Gastrocnemius medialis (tissue), 4 donors: ENCODE measurements at regions of chr6 and their contacts with region 1.

Region 1: DNA sequence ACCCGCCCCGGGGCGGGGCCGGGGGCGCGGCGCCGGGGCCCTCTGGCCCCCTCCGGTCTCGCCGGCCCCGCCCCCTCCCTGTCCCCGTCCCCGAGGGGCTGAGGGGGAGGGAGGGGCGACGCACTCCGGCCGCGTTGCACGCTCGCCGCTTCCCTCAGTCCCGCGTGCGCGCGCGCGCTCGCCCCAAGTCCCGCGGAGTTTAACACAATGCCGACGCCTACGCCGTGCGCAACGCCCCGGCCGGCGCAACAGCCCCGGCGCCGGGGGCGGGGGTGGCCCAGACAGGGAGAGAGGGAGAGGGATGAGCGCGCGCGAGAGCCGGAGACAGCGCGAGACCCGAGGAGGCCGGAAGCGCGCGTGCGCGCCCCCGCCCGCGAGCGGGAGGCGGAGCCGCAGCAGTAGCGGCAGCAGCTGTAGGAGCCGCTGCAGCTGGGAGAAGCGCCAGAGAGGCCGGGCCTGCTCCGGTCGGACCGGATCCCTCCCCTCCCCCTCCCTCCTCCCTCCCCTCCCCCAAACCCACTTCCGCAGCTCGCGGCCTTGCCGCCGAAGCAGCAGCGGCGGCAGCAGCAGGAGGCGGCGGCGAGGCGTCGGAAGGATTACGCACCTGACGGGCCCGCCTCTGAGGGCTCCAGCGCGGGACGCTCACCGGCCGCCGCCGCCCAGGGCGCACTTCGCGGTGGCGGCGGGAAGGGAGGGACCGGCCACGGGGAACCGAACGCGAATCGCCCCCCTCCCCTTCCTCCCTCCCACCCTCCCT is 905 bp downstream of the ZBTB2 start:
- DNase-seq: peak; percentile 93 to 97
- ATAC-seq: peak; percentile 78 to 81
- H3K4me3 ChIP-seq: peak overlapping the region; percentile 81 to 96 (median 91)
- H3K27ac ChIP-seq: peak overlapping the region; percentile 94 to 100 (median 99)
- H3K4me1 ChIP-seq: peaks cover 48 to 53% of the 10 kb centered on the region in 2 donors
- H3K27me3 ChIP-seq: no peaks in the 10 kb centered on the region
- CTCF ChIP-seq: no peak
- POLR2A ChIP-seq: peak; percentile 51 to 60

Region 2: DNA sequence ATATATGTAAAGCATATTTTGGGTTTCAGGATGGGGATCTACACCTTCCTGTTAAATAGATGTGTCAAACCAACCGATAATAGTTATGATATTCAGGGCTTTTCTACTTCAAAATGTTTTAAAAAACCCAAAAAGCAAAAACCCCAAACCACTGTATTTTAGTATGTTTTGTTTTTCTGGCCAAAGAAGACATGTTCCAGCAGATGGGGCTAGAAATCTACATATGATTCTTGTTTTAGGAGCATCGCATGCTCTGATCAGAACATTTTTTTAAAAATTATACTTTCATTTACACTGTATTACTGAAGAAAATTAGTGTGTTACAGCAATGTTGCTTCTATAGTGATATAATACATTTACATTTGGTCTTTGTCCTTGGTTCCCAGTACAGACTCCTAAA is 50.5 kb after region 1 on chr6:
- in situ Hi-C with region 1: loop called in 1 of 4 experiments (anchors 10 kb)
- intact Hi-C with region 1: no loop called
- DNase-seq: no peak
- ATAC-seq: no peak
- H3K4me3 ChIP-seq: no peak overlapping the region
- H3K27ac ChIP-seq: peak overlapping the region in 1 of 4 donors; percentile 1
- H3K4me1 ChIP-seq: peaks cover 14 to 41% of the 10 kb centered on the region in 2 donors
- H3K27me3 ChIP-seq: no peaks in the 10 kb centered on the region
- CTCF ChIP-seq: peak in 2 of 5 experiments; percentile 14 to 32
- POLR2A ChIP-seq: no peak

Region 3: GRCh38 chr6:151451950-151452749 is 61.7 kb after region 1 on chr6 and contains the start of gene RMND1:
- in situ Hi-C with region 1: loop called in 3 of 4 experiments (anchors 5 to 10 kb)
- intact Hi-C with region 1: loop called (anchors 1 kb)
- DNase-seq: peak; percentile 99 to 100
- ATAC-seq: peak; percentile 97 to 99
- H3K4me3 ChIP-seq: peak within 1 kb of the TSS; percentile 82 to 94 (median 88)
- H3K27ac ChIP-seq: peak within 1 kb of the TSS; percentile 86 to 97 (median 94)
- H3K4me1 ChIP-seq: peaks cover 22 to 29% of the 10 kb centered on the region in 2 donors
- H3K27me3 ChIP-seq: no peaks in the 10 kb centered on the region
- CTCF ChIP-seq: no peak
- POLR2A ChIP-seq: peak; percentile 32 to 56
- total RNA-seq, gene RMND1: 6.4 to 9.6 (median 8.4) TPM

Region 4: GRCh38 chr6:151475653-151476523 is 85.4 kb after region 1 on chr6:
- in situ Hi-C with region 1: no loop called
- intact Hi-C with region 1: no loop called
- DNase-seq: no peak
- ATAC-seq: peak in 1 of 2 donors; percentile 44
- H3K4me3 ChIP-seq: peak overlapping the region in 1 of 4 donors; percentile 16
- H3K27ac ChIP-seq: no peak overlapping the region
- H3K4me1 ChIP-seq: no peaks in the 10 kb centered on the region
- H3K27me3 ChIP-seq: no peaks in the 10 kb centered on the region
- CTCF ChIP-seq: peak; percentile 27 to 81 (median 72)
- POLR2A ChIP-seq: no peak

Region 5: GRCh38 chr6:152982768-152983636 is 1592.5 kb after region 1 on chr6 and contains the start of gene FBXO5:
- in situ Hi-C with region 1: no loop called
- intact Hi-C with region 1: loop called (anchors 5 kb)
- DNase-seq: peak; percentile 95 to 97
- ATAC-seq: peak; percentile 92 to 94
- H3K4me3 ChIP-seq: peak within 1 kb of the TSS; percentile 68 to 80 (median 76)
- H3K27ac ChIP-seq: peak within 1 kb of the TSS; percentile 87 to 97 (median 93)
- H3K4me1 ChIP-seq: peaks cover 17 to 23% of the 10 kb centered on the region in 2 donors
- H3K27me3 ChIP-seq: no peaks in the 10 kb centered on the region
- CTCF ChIP-seq: no peak
- POLR2A ChIP-seq: peak; percentile 46 to 67
- total RNA-seq, gene FBXO5: 0.78 to 1.9 (median 1.0) TPM